Posterior vena cava (tissue), 2 donors: ENCODE measurements at regions of chr18 and their contacts with region 1.

Region 1: DNA sequence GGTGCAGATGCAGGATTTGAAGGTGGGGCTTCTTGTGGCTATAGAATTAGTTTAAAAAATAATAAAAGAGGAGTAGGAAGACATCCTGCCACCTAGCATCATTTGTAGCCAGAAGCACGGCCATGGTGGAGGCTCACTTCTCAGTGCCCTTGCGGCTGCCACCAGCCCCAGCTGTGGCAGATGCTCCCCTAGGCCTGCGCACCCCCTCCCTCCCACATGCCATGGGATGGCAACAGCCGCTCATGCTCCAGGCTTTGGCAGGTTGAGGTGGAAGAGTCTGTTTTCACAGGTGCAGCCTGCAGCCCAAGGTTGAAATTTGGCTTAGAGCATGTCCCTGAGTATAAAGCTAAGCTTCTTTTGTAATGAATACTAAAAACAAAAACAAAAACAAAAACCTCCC is 96.4 kb downstream of the GATA6 start:
- DNase-seq: no peak

Region 2: GRCh38 chr18:22243513-22243912 is 22.3 kb before region 1 on chr18:
- intact Hi-C with region 1: loop called in 1 of 2 experiments (anchors 1 kb)
- DNase-seq: no peak